ENCODE measurements at regions of chr4 and their contacts with region 1.

Region 1: DNA sequence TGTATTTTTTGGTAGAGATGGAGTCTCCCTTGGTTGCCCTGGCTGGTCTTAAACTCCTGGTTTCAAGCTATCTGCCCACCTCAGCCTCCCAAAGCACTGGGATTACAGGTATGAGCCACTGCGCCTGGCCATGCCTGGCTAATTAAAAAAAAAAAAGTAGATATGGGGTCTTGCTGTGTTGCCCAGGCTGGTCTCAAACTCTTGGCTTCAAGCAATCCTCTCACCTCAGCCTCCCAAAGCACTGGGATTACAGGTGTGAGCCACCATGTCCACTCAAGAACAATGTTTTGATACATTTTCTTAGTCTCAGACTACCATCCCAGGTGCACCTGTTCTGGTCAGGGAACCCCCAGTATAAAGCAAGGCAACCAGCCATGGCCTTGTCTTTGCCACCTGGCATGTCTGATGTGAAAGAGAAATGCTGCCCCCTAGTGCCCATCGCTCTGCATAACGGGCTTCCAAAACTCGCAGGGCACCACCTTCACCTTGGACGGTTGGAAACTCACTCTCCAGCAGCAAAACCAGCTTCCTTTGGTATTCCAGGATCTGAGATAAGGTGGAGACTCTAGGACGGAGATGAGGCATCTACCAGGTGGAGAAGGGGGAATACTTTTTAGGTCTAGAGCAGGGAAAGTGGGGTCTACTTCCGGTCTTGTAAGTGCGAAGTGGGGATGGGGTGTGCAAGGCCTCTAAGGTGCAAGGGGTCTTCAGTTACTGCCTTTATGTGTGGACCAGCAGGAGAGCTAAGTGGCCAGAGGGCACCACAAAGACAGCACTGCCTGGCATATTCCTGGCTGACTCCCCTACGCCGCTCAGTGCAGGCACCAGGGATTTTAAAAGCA is 47.7 kb upstream of the AFAP1 start:
- DNase-seq: peak; percentile 87
- H3K4me3 ChIP-seq: no peak overlapping the region
- H3K27ac ChIP-seq: no peak overlapping the region
- H3K4me1 ChIP-seq: no peaks in the 10 kb centered on the region
- H3K27me3 ChIP-seq: no peaks in the 10 kb centered on the region
- CTCF ChIP-seq: peak; percentile 86

Region 2: GRCh38 chr4:7398104-7398423 is 589.3 kb before region 1 on chr4:
- intact Hi-C with region 1: no loop called
- DNase-seq: no peak
- H3K4me3 ChIP-seq: no peak overlapping the region
- H3K27ac ChIP-seq: no peak overlapping the region
- H3K4me1 ChIP-seq: no peaks in the 10 kb centered on the region
- H3K27me3 ChIP-seq: no peaks in the 10 kb centered on the region
- CTCF ChIP-seq: no peak

Region 3: DNA sequence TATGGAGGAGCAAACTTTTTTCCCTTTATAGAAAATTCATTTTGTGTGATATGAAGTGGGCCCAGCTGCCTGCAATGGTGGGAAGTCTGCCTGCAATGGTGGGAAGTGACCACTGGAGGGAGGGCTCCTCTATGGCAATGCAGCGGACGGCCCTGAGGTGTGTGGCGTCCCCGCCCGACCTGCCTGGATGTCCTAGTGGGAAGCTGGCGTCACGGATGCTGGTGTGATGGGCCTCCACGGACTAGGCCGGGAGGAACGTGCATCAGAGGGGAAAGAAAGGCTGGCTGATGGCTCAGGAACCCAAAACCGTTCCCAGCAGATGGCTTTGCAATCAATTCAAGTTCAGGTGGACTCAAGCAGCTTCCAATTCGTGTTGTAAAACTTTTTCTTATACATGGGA is 225.6 kb before region 1 on chr4:
- intact Hi-C with region 1: loop called (anchors 5 kb)
- DNase-seq: peak; percentile 65
- H3K4me3 ChIP-seq: no peak overlapping the region
- H3K27ac ChIP-seq: no peak overlapping the region
- H3K4me1 ChIP-seq: no peaks in the 10 kb centered on the region
- H3K27me3 ChIP-seq: no peaks in the 10 kb centered on the region
- CTCF ChIP-seq: peak; percentile 61

Region 4: DNA sequence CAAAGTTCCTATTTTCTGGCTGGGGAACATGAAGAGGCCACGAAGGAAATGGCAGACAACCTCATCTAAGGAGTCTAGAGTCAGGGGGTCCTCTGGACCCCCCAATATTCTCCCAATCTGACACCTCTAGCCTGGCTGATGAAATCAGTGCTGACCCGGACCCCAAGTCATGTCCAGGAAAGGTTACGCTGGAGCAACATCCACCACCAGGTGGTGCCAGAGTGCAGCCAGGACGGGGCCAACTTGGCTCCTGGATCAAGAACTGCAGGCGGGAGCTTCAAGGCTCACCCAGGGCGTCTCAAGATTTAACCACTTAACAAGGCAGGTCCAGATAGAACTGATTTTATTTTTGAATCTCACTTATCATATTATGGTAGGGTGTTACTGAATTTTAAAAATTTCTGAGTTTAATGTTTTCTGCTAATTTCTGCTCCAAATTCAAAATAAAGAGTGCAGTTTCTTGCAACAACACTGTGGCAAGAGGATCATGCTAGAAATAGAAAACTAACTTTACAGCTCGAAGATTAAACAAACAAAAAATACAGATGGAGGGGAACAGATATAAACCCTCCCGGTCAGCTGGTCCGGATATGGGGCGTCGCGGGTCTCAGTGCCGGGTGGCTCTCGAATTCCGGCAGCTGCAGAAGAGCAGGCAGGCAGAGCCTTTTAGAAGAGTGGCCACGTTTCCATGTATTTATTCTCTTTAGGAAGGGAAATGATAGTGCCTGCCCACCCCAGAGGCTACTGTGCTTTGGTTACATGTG is 183.2 kb before region 1 on chr4:
- intact Hi-C with region 1: loop called (anchors 1 kb)
- DNase-seq: peak; percentile 92
- H3K4me3 ChIP-seq: no peak overlapping the region
- H3K27ac ChIP-seq: no peak overlapping the region
- H3K4me1 ChIP-seq: no peaks in the 10 kb centered on the region
- H3K27me3 ChIP-seq: no peaks in the 10 kb centered on the region
- CTCF ChIP-seq: peak; percentile 87

Region 5: DNA sequence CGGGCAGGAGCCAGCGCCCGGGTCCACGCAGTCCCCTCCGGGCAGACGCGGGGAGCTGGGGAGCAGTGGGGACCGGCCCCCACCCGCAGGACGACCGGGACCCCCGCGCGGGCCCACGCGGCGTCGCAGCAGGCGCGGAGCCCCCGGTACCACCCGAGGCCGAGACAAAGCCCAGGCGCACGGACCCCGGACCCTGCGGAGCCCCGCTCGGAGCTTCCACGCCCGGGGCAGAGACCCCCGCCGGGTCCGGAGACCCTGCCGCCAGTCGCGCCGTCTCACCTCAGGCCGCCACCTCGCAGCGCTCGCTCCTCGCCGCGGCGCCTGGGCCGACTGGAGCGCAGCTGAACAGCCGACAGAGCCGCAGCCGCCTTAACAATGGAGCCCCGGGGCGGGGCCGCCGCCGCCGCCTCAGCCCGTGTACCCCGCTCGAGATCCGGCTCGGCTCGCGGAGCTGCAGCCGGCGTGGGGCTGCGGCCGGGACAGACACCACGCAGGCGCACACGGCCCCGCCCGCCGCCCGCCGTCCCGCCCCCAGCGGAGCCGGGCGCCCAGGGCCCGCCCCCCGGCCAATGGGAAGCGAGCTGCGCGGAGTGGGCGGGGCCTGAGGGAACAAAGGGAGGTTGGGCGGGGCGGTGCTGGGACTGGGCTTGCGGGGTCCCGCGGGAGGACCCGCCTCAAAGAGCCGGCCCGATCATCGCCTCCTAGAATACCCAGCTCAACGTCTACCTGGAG is 47.8 kb before region 1 on chr4 and contains the start of gene AFAP1:
- intact Hi-C with region 1: loop called (anchors 5 kb)
- DNase-seq: peak; percentile 90
- H3K4me3 ChIP-seq: peak within 1 kb of the TSS; percentile 81
- H3K27ac ChIP-seq: peak within 1 kb of the TSS; percentile 74
- H3K4me1 ChIP-seq: peaks cover 4% of the 10 kb centered on the region
- H3K27me3 ChIP-seq: no peaks in the 10 kb centered on the region
- CTCF ChIP-seq: no peak
- total RNA-seq, gene AFAP1: 29.7 to 43.9 TPM